ENCODE measurements at regions of chr3 and their contacts with region 1.

Region 1: DNA sequence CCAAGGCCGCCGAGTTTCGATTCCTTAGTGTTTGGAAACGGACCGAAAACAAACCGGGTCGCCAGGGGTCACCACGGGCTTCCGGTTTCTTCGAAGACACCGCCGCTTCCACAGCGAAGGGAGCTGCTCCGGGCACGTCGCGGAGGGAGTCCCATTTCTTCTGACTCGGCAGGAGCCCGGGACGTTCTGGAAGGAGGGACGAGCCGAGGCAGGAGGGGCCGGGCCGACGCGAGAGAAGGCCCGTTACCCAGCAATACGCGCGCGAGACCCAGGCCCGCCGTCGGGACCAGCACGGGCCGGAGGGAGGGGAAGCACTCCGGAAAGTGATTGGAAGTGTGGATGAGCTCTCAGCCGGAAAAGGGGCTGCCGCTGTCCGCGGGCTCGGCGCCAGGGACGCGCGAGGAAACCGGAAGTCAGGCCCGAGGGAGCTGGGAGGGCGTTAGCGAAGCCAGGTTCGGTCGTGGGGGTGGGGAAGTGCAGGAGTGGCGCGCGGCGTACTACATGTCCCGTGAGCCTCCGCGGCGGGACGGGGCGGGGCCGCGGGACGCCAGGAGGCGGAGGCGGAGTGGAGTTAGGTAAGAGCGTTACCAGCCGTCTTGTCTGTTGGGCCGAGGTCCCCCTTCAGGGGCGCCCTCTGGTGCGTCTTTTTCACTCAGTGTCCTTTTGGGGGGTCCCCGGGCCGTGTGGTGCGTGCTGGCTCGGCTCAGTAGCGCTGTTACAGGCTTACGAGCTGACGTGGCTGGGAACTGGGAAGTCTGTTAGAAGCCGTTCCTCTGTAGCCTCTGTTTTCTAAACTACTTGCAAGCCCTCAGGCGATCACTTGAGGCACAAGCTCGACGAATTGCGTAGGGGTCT is at the starts of genes AZI2 and ZCWPW2:
- DNase-seq: peak; percentile 94
- H3K4me3 Mint-ChIP-seq: peak within 1 kb of the TSS; percentile 89
- H3K27ac Mint-ChIP-seq: peak within 1 kb of the TSS; percentile 92
- H3K4me1 Mint-ChIP-seq: peaks cover 52% of the 10 kb centered on the region
- H3K27me3 Mint-ChIP-seq: no peaks in the 10 kb centered on the region
- total RNA-seq, gene AZI2: 75.5 to 80.1 TPM
- total RNA-seq, gene ZCWPW2: 0.25 to 0.48 TPM

Region 2: GRCh38 chr3:28241221-28242160 is 107.4 kb before region 1 on chr3 and contains the start of gene CMC1:
- CTCF ChIA-PET with region 1: no interaction called
- POLR2A ChIA-PET with region 1: interaction called, 15 read pairs
- DNase-seq: peak; percentile 89
- H3K4me3 Mint-ChIP-seq: peak within 1 kb of the TSS; percentile 90
- H3K27ac Mint-ChIP-seq: peak within 1 kb of the TSS; percentile 82
- H3K4me1 Mint-ChIP-seq: peaks cover 39% of the 10 kb centered on the region
- H3K27me3 Mint-ChIP-seq: no peaks in the 10 kb centered on the region
- total RNA-seq, gene CMC1: 18.8 to 21.0 TPM

Region 3: DNA sequence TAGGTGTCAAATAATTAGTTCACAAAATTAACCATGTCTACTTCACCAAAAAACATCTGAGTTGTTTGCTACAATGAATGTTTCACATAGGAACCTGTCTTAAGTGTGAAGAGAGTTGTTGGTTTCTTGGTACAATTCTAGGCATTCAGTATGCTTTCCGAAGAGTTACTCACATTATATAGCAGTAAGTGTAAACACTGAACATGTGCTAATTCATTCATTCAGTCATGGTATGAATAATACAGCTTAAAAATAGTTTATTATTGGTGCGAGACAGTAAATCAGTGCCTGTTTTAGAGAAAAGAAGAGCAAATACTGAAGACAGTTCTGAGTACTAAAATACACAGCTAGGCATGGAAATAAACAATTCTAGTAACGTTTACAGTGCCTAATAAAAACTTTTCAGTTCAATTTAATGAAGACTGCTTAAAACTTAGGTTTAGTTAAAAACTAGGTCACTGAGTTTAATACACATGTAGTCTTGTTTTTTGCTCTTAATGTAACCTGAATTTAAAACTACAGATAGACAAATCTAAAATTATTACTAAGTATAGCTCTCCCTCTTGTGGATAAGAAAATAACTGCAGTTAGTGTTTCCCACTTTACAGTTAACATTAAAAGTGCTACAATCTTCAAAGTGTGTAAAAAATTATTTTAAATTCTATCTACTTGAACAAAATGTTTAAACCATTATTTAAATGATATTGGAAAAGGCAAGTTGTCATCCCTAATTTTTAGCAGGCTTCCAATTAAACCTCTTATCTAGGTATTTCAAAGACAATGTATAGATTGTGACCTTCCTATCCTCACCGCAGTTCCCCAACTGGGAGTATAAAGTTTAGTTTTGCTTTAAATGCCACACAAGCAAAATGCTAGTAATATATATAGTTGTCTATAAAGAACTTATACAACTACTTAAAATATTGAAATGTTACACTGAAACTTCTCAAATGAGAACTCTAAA is 20.4 kb before region 1 on chr3:
- CTCF ChIA-PET with region 1: interaction called, 32 read pairs
- POLR2A ChIA-PET with region 1: interaction called, 38 read pairs
- DNase-seq: no peak
- H3K4me3 Mint-ChIP-seq: no peak overlapping the region
- H3K27ac Mint-ChIP-seq: no peak overlapping the region
- H3K4me1 Mint-ChIP-seq: peaks cover 36% of the 10 kb centered on the region
- H3K27me3 Mint-ChIP-seq: no peaks in the 10 kb centered on the region

Region 4: GRCh38 chr3:28334552-28334951 is 14.3 kb before region 1 on chr3:
- CTCF ChIA-PET with region 1: interaction called, 16 read pairs
- POLR2A ChIA-PET with region 1: interaction called, 30 read pairs
- DNase-seq: no peak
- H3K4me3 Mint-ChIP-seq: no peak overlapping the region
- H3K27ac Mint-ChIP-seq: no peak overlapping the region
- H3K4me1 Mint-ChIP-seq: peaks cover 6% of the 10 kb centered on the region
- H3K27me3 Mint-ChIP-seq: no peaks in the 10 kb centered on the region